ENCODE measurements at regions of chr7 and their contacts with region 1.

Region 1: GRCh38 chr7:80530136-80530535 is 18.3 kb upstream of the GNAT3 start:
- DNase-seq: no peak
- H3K4me3 ChIP-seq: no peak overlapping the region
- H3K27ac ChIP-seq: no peak overlapping the region
- H3K4me1 ChIP-seq: no peaks in the 10 kb centered on the region
- H3K27me3 ChIP-seq: no peaks in the 10 kb centered on the region
- CTCF ChIP-seq: no peak
- EP300 ChIP-seq: no peak
- POLR2A ChIP-seq: no peak

Region 2: GRCh38 chr7:80450621-80451308 is 79.4 kb before region 1 on chr7:
- intact Hi-C with region 1: no loop called
- DNase-seq: no peak
- H3K4me3 ChIP-seq: no peak overlapping the region
- H3K27ac ChIP-seq: no peak overlapping the region
- H3K4me1 ChIP-seq: no peaks in the 10 kb centered on the region
- H3K27me3 ChIP-seq: no peaks in the 10 kb centered on the region
- CTCF ChIP-seq: no peak
- EP300 ChIP-seq: no peak
- POLR2A ChIP-seq: no peak

Region 3: DNA sequence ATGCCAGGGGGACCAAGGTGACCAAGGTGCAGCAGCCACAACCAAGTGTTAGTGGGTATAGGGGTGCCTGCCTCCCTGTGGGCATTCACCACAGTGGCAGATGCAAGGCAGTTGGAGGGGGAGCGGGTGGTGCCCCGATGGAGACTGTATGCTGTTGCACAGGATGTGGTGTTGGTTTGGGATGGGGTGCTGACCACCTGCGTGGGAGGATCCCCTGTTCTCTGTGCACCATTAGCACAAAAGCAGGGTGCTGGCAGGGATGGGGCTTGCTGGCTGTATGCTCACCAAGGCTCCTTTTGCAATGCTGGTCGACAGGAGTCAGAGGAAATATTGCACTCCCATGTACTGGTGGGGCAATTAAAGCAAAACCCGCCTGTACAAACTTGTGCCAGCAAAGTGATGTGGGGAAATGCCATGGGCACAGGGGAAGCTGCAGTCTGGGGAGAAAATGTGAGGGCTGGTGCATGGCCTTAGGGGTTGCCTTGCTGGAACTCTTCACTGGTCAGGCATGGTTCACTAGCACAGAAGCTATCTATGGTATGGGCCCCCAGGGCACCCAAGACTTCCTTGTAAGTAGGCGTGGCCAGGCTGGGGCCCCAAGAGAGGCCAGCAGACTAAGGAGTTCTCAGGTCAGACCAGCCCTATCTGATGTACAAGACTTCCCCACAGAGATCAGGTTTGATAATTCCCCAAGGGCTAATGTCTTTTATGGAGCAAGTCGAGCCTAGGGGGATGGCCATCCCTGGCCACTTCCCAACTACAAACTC is 33.6 kb after region 1 on chr7:
- intact Hi-C with region 1: loop called in 1 of 4 experiments (anchors 2 kb)
- DNase-seq: no peak
- H3K4me3 ChIP-seq: no peak overlapping the region
- H3K27ac ChIP-seq: no peak overlapping the region
- H3K4me1 ChIP-seq: no peaks in the 10 kb centered on the region
- H3K27me3 ChIP-seq: no peaks in the 10 kb centered on the region
- CTCF ChIP-seq: no peak
- EP300 ChIP-seq: no peak
- POLR2A ChIP-seq: no peak

Region 4: GRCh38 chr7:80711531-80711930 is 181.4 kb after region 1 on chr7:
- intact Hi-C with region 1: no loop called
- DNase-seq: no peak
- H3K4me3 ChIP-seq: no peak overlapping the region
- H3K27ac ChIP-seq: no peak overlapping the region
- H3K4me1 ChIP-seq: no peaks in the 10 kb centered on the region
- H3K27me3 ChIP-seq: no peaks in the 10 kb centered on the region
- CTCF ChIP-seq: no peak
- EP300 ChIP-seq: no peak
- POLR2A ChIP-seq: no peak

Measured in ovary (tissue), 10 donors.